ENCODE measurements at regions of chr12 and their contacts with region 1.

Region 1: GRCh38 chr12:132761032-132761920 is at the start of gene ANKLE2:
- DNase-seq: peak in 2 of 3 donors; percentile 37 to 48
- H3K4me3 ChIP-seq: peak within 1 kb of the TSS; percentile 83 to 95 (median 84)
- H3K4me3 Mint-ChIP-seq: peak within 1 kb of the TSS; percentile 84 to 97
- H3K27ac ChIP-seq: peak within 1 kb of the TSS; percentile 85 to 91
- H3K27ac Mint-ChIP-seq: peak within 1 kb of the TSS; percentile 92 to 97 (median 94)
- H3K4me1 ChIP-seq: peaks cover 27 to 40% of the 10 kb centered on the region in 2 donors
- H3K4me1 Mint-ChIP-seq: peaks cover 30% of the 10 kb centered on the region
- H3K27me3 ChIP-seq: no peaks in the 10 kb centered on the region
- H3K27me3 Mint-ChIP-seq: peaks cover 0 to 2% (median 0%) of the 10 kb centered on the region in 3 donors
- CTCF ChIP-seq: no peak
- polyA plus RNA-seq, gene ANKLE2: 10.1 to 88.4 (median 15.0) TPM

Region 2: DNA sequence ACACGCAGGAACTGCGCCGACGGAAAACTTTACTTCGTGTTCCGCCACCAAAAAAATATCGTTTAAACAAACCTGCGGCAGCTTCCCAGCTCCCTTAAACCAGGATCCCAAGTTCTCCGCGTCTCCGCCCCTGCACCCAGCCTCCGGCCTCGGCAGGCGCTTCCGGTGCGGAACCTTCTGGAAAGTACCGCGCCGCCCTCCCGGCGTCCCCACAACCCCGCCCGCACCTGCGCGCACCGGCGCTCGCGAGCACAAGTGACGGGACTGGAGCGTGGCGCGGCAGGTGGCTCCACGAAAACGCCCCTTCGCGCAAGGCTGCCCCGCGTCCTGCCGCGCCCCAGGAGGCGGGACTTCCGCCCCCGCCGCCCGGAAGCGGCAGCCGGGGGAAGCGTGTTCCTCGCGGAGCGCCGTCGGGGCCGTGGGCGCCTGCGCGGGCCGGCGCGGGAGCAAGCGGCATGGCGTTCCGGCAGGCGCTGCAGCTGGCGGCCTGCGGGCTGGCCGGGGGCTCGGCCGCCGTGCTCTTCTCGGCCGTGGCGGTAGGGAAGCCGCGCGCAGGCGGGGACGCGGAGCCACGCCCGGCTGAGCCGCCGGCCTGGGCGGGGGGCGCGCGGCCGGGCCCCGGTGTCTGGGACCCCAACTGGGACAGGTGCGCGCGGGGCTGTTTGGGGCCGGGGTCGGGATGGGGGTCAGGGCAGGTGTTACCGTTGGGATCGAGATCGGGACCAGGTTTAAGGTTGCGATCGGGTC is 50.7 kb before region 1 on chr12 and contains the start of gene PGAM5:
- intact Hi-C with region 1: loop called in 1 of 2 experiments (anchors 5 kb)
- DNase-seq: peak; percentile 62 to 73 (median 72)
- H3K4me3 ChIP-seq: peak within 1 kb of the TSS; percentile 56 to 97 (median 92)
- H3K4me3 Mint-ChIP-seq: peak within 1 kb of the TSS; percentile 89 to 97
- H3K27ac ChIP-seq: peak within 1 kb of the TSS; percentile 42 to 74
- H3K27ac Mint-ChIP-seq: peak within 1 kb of the TSS; percentile 72 to 88 (median 83)
- H3K4me1 ChIP-seq: peaks cover 16 to 20% of the 10 kb centered on the region in 2 donors
- H3K4me1 Mint-ChIP-seq: peaks cover 15% of the 10 kb centered on the region
- H3K27me3 ChIP-seq: no peaks in the 10 kb centered on the region
- H3K27me3 Mint-ChIP-seq: peaks cover 0 to 2% (median 2%) of the 10 kb centered on the region in 3 donors
- CTCF ChIP-seq: no peak
- polyA plus RNA-seq, gene PGAM5: 7.0 to 10.3 (median 9.6) TPM